CD4-positive, alpha-beta memory T cell (primary cell): ENCODE measurements at regions of chr2 and their contacts with region 1.

Region 1: DNA sequence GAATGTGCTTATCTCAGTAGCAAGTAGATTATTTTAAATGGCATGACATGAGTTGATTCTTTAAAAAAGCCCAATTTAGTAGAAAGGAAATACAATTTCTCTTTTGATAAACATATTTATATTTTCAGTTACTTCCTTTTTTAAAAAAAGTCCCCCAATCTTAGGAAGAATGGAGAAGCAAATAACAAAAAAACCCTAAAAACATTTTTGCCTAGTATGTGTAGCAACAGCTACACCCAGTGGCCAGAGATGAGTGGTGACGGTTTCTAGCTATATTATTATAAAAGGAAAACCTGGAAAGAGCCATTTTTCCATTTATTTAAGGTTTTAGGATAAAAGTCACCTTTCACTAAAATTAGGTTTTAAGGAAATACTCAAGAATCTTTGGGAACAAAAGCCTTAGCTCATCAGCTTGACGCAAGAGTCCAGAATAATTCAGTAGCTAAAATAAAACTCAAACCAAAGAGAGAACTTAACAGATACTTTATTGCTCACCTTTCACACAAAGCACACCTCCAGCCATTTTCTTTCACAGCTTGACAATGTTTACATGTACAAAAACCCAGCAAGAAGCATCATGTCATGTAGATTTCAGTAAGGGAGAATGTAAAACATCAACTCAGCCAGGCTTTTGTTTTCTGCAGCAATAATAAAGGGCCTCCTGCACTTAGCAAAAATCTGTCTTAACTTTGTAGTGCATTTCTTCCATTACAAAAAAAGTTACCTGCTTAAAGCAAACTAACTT is 15.7 kb downstream of the FAM98A start:
- DNase-seq: peak; percentile 25 to 39 (median 36)
- H3K4me3 ChIP-seq: no peak overlapping the region
- H3K4me3 Mint-ChIP-seq: no peak overlapping the region
- H3K27ac ChIP-seq: no peak overlapping the region
- H3K27ac Mint-ChIP-seq: peak overlapping the region in 1 of 7 donors; percentile 43
- H3K4me1 ChIP-seq: peaks cover 5% of the 10 kb centered on the region
- H3K4me1 Mint-ChIP-seq: peaks cover 0 to 6% (median 2%) of the 10 kb centered on the region in 4 donors
- H3K27me3 ChIP-seq: no peaks in the 10 kb centered on the region
- H3K27me3 Mint-ChIP-seq: no peaks in the 10 kb centered on the region

Region 2: GRCh38 chr2:32772638-32773447 is 810.5 kb before region 1 on chr2:
- CTCF ChIA-PET with region 1: interaction called, 3 read pairs
- POLR2A ChIA-PET with region 1: no interaction called
- intact Hi-C with region 1: loop called (anchors 5 kb)
- DNase-seq: no peak
- H3K4me3 ChIP-seq: no peak overlapping the region
- H3K4me3 Mint-ChIP-seq: no peak overlapping the region
- H3K27ac ChIP-seq: no peak overlapping the region
- H3K27ac Mint-ChIP-seq: peak overlapping the region in 1 of 7 donors; percentile 7
- H3K4me1 ChIP-seq: no peaks in the 10 kb centered on the region
- H3K4me1 Mint-ChIP-seq: no peaks in the 10 kb centered on the region
- H3K27me3 ChIP-seq: no peaks in the 10 kb centered on the region
- H3K27me3 Mint-ChIP-seq: no peaks in the 10 kb centered on the region

Region 3: DNA sequence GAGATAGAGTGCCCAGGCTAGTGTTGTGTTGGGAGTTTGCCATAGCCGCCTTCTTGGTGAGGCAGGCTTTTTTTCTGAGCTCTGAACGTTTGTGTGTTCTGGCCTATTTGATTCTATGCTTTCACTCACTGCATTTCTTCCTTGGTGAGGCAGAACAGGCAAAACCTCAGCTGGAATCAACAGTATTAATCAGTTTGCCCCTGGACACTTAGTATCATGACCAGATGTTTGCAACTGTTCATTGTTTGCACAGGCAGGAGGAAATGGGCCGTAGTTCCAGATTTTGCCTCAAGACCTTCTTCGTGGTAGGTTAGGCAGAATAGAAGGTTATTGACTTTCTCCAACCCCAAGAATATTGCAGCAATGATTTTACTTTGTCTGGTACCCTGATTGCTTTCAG is 325.0 kb before region 1 on chr2:
- CTCF ChIA-PET with region 1: no interaction called
- POLR2A ChIA-PET with region 1: no interaction called
- intact Hi-C with region 1: no loop called
- DNase-seq: no peak
- H3K4me3 ChIP-seq: no peak overlapping the region
- H3K4me3 Mint-ChIP-seq: no peak overlapping the region
- H3K27ac ChIP-seq: no peak overlapping the region
- H3K27ac Mint-ChIP-seq: no peak overlapping the region
- H3K4me1 ChIP-seq: no peaks in the 10 kb centered on the region
- H3K4me1 Mint-ChIP-seq: no peaks in the 10 kb centered on the region
- H3K27me3 ChIP-seq: no peaks in the 10 kb centered on the region
- H3K27me3 Mint-ChIP-seq: peaks cover 0 to 6% of the 10 kb centered on the region in 2 donors

Region 4: GRCh38 chr2:33372940-33373553 is 210.3 kb before region 1 on chr2:
- CTCF ChIA-PET with region 1: interaction called, 11 read pairs
- POLR2A ChIA-PET with region 1: no interaction called
- intact Hi-C with region 1: loop called (anchors 2 kb)
- DNase-seq: peak in 4 of 5 donors; percentile 16 to 35 (median 26)
- H3K4me3 ChIP-seq: no peak overlapping the region
- H3K4me3 Mint-ChIP-seq: no peak overlapping the region
- H3K27ac ChIP-seq: no peak overlapping the region
- H3K27ac Mint-ChIP-seq: no peak overlapping the region
- H3K4me1 ChIP-seq: no peaks in the 10 kb centered on the region
- H3K4me1 Mint-ChIP-seq: no peaks in the 10 kb centered on the region
- H3K27me3 ChIP-seq: no peaks in the 10 kb centered on the region
- H3K27me3 Mint-ChIP-seq: peaks cover 0 to 2% of the 10 kb centered on the region in 2 donors

Region 5: DNA sequence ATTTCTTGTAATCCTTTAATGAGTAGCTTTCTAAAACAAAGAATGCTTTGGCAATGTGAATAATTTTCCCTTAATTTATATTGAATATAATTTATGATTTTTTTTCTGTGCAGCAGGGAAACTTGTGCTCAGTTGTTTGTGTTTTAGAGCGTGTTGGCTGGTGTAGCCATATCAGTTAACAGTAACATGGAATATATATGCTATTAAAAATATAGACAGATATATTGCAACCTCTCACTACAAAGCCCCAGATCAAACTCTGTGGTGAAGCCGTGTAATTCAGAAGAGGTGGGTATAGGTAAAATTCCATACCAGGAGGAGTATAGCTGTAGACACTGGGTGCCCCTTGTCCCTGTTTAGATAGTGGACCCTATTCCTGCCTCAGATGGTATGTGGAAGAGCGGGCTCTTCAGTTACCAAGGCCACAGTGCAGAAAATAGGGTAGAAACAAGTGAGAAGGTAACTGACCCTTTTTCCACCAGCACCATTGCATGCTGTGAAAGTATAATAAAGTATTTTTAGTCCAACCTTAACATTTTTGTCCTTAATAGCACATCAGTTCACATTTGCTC is 125.0 kb before region 1 on chr2:
- CTCF ChIA-PET with region 1: no interaction called
- POLR2A ChIA-PET with region 1: no interaction called
- intact Hi-C with region 1: no loop called
- DNase-seq: no peak
- H3K4me3 ChIP-seq: no peak overlapping the region
- H3K4me3 Mint-ChIP-seq: no peak overlapping the region
- H3K27ac ChIP-seq: no peak overlapping the region
- H3K27ac Mint-ChIP-seq: no peak overlapping the region
- H3K4me1 ChIP-seq: no peaks in the 10 kb centered on the region
- H3K4me1 Mint-ChIP-seq: no peaks in the 10 kb centered on the region
- H3K27me3 ChIP-seq: no peaks in the 10 kb centered on the region
- H3K27me3 Mint-ChIP-seq: peaks cover 0 to 4% of the 10 kb centered on the region in 2 donors

Region 6: DNA sequence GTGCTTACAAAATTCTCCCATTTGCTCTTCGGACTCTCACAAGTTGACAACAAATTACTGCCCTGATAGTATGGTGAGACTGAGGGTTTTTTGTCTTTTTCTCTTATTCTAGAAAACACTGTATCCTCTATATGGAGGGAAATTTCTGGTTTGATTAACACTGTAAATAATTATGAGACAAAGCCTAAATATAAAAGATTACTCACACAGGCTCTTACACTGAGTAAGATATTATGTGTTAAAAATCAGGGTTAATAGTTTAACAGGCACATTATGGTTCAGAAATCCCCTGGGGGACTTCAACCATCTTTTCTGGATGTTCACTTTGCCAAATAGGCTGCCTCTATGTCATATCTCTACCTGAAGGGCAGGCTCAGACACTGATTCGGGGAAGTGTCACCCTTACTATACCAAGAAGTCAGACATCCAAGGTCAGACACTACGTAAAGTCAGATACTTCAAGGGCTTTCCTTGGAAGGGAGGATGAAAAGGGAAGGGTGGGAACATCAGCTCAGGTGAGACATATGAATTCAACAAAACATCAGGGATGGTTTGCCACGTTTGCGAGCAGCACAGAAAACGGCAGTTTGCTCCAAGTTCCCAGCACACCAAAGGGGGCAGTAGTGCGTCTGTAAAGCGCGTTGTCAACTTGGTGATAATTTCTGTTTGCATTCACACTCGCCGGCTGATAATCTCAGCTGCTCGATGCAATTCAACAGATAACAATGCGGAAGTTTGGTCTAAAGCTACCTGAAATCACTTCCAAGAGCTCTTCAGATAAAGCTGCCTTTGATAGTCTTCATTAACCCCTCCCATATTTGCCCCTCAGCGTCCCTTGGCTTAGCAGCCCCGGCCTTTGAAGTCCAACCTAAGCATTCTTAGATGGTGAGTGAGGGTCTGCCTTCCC is 107.9 kb before region 1 on chr2:
- CTCF ChIA-PET with region 1: interaction called, 36 read pairs
- POLR2A ChIA-PET with region 1: interaction called, 25 read pairs
- intact Hi-C with region 1: loop called (anchors 1 kb)
- DNase-seq: peak; percentile 84 to 89 (median 87)
- H3K4me3 ChIP-seq: peak overlapping the region; percentile 91 to 94
- H3K4me3 Mint-ChIP-seq: peak overlapping the region; percentile 93 to 99 (median 96)
- H3K27ac ChIP-seq: peak overlapping the region; percentile 76
- H3K27ac Mint-ChIP-seq: peak overlapping the region; percentile 96 to 100 (median 98)
- H3K4me1 ChIP-seq: peaks cover 25% of the 10 kb centered on the region
- H3K4me1 Mint-ChIP-seq: peaks cover 19 to 53% (median 31%) of the 10 kb centered on the region in 4 donors
- H3K27me3 ChIP-seq: no peaks in the 10 kb centered on the region
- H3K27me3 Mint-ChIP-seq: no peaks in the 10 kb centered on the region

Region 7: GRCh38 chr2:33561872-33562271 is 21.5 kb before region 1 on chr2:
- CTCF ChIA-PET with region 1: no interaction called
- POLR2A ChIA-PET with region 1: no interaction called
- intact Hi-C with region 1: no loop called
- DNase-seq: no peak
- H3K4me3 ChIP-seq: no peak overlapping the region
- H3K4me3 Mint-ChIP-seq: no peak overlapping the region
- H3K27ac ChIP-seq: no peak overlapping the region
- H3K27ac Mint-ChIP-seq: no peak overlapping the region
- H3K4me1 ChIP-seq: no peaks in the 10 kb centered on the region
- H3K4me1 Mint-ChIP-seq: no peaks in the 10 kb centered on the region
- H3K27me3 ChIP-seq: no peaks in the 10 kb centered on the region
- H3K27me3 Mint-ChIP-seq: no peaks in the 10 kb centered on the region

Region 8: DNA sequence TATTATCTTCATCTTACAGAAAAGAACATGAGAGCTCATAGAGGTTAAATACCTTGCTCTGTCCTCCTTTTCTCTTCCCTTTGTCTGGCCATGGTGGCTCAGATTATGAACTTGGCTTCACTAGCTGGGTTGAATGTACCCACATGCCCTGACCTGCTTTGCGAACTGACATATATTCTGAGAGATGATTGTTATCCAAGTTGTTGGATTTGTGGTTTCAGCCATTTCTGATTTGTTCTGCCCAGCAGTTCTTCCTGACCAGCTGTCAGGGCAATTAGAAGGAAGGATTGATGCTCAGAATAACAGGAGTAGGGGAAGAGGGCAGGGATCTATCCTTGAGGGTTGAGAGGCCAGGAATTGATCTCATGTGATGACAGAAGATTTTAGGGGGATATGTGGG is 252.5 kb after region 1 on chr2:
- CTCF ChIA-PET with region 1: no interaction called
- POLR2A ChIA-PET with region 1: no interaction called
- intact Hi-C with region 1: no loop called
- DNase-seq: no peak
- H3K4me3 ChIP-seq: no peak overlapping the region
- H3K4me3 Mint-ChIP-seq: no peak overlapping the region
- H3K27ac ChIP-seq: no peak overlapping the region
- H3K27ac Mint-ChIP-seq: no peak overlapping the region
- H3K4me1 ChIP-seq: no peaks in the 10 kb centered on the region
- H3K4me1 Mint-ChIP-seq: no peaks in the 10 kb centered on the region
- H3K27me3 ChIP-seq: no peaks in the 10 kb centered on the region
- H3K27me3 Mint-ChIP-seq: no peaks in the 10 kb centered on the region